Prostate gland (tissue), 2 donors: ENCODE measurements at regions of chr1 and their contacts with region 1.

Region 1: DNA sequence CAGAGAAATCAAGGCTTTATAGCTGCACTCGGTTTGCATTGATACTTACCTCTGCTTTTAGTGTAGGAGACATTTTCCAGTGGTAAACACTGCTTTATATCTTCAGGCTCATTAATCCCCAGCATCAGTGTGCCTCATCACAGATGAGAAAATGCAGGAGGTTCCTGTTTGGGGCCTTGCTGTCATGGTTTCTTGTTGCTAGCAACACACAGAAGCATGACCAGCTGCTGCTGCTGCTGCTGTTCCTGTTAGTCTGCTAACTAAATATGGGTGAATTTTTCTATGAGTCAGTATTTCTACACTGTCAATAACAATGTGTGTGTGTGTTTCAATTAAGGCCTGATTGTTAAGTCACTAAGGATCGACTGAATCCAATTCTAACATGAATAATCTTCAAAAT is 85.8 kb upstream of the RGS1 start:
- DNase-seq: peak; percentile 33
- H3K4me3 ChIP-seq: no peak overlapping the region
- H3K27ac ChIP-seq: peak overlapping the region; percentile 42 to 64
- H3K4me1 ChIP-seq: peaks cover 5% of the 10 kb centered on the region
- H3K27me3 ChIP-seq: no peaks in the 10 kb centered on the region
- CTCF ChIP-seq: no peak
- POLR2A ChIP-seq: no peak

Region 2: GRCh38 chr1:192913683-192914082 is 423.9 kb after region 1 on chr1:
- intact Hi-C with region 1: loop called (anchors 10 kb)
- DNase-seq: no peak
- H3K4me3 ChIP-seq: no peak overlapping the region
- H3K27ac ChIP-seq: peak overlapping the region; percentile 30 to 65
- H3K4me1 ChIP-seq: no peaks in the 10 kb centered on the region
- H3K27me3 ChIP-seq: no peaks in the 10 kb centered on the region
- CTCF ChIP-seq: no peak
- POLR2A ChIP-seq: no peak